Activated naive CD4-positive, alpha-beta T cell treated with anti-CD3 and anti-CD28 coated beads for 36 hours (primary cell): ENCODE measurements at regions of chr4 and their contacts with region 1.

Region 1: DNA sequence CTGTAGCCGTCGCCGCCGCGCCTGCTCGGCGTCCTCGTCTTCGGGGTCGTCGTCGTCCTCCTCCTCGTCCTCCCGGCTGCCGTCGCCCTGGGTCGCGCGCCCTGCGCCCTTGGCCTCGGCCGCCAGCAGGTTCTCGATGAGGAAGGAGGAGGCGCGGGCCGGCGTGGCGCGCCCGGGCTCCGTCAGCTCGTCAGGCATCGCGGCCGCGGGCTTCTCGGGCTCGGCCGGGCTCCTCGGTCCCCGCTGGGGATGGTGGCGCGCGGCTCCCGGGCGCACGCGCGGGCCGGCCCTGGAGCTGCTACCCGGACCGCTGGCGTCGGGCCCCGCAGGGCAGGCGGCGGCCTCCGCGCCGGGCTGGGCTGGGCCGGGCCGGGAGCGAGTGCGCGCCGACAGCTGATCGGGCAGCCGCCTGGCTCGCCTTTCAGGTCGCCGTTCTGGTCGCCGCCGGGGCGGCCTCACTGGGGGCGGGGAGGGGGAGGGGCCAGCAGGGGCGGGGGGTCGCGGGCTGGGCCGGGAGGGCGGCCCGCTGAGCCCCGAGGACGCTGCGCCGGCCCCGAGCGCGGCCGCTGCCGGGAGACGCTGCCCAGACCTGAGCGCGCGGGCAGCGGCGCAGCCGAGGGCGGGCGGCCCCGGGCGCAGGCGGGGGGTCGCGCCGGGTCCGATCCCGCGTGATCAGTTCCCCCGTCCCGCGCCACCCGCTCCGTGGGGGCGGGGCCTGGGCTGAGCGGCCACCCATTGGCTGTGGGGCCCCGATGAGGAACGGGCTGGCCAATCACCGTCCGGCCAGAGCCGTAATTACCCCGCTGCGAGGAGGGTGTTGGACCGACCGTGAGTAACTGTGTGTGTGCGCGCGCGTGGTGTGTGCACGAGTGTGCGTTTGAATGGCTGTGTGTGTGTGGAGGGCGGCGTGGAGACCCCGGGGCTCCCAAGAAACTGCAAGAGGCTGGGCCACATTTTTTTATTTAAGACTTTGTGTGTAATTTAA is at the start of gene HMX1:
- DNase-seq: no peak
- H3K4me3 Mint-ChIP-seq: no peak within 1 kb of the TSS
- H3K27ac Mint-ChIP-seq: no peak within 1 kb of the TSS
- H3K4me1 Mint-ChIP-seq: peaks cover 13% of the 10 kb centered on the region
- H3K27me3 Mint-ChIP-seq: peaks cover 74% of the 10 kb centered on the region
- total RNA-seq, gene HMX1: not detected

Region 2: GRCh38 chr4:8855818-8856245 is 15.9 kb before region 1 on chr4:
- CTCF ChIA-PET with region 1: no interaction called
- intact Hi-C with region 1: loop called (anchors 2 kb)
- DNase-seq: no peak
- H3K4me3 Mint-ChIP-seq: no peak overlapping the region
- H3K27ac Mint-ChIP-seq: no peak overlapping the region
- H3K4me1 Mint-ChIP-seq: peaks cover 14% of the 10 kb centered on the region
- H3K27me3 Mint-ChIP-seq: peaks cover 60% of the 10 kb centered on the region

Region 3: DNA sequence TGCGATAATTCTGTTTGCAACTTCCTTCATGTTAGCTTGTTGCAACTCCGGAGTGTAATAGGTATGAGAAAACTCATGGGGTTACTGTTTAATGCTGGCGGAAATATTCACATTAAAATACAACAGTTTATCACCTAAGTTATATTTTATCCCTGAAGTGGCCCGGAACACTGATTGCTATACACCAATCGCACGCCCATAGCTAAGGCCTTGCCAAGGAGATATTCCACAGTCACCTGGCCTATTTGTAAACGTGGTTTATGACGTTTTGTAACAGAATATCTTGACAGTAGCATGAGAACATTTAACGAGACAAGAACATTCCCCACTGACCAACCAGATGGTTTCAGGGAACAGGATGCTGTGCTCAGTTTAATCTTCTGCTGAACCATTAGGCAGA is 275.3 kb after region 1 on chr4:
- CTCF ChIA-PET with region 1: no interaction called
- intact Hi-C with region 1: no loop called
- DNase-seq: no peak
- H3K4me3 Mint-ChIP-seq: no peak overlapping the region
- H3K27ac Mint-ChIP-seq: no peak overlapping the region
- H3K4me1 Mint-ChIP-seq: peaks cover 2% of the 10 kb centered on the region
- H3K27me3 Mint-ChIP-seq: no peaks in the 10 kb centered on the region